ENCODE measurements at regions of chr5 and their contacts with region 1.

Region 1: GRCh38 chr5:148740966-148741742 is 85.3 kb upstream of the ADRB2 start:
- DNase-seq: no peak
- H3K4me3 ChIP-seq: no peak overlapping the region
- H3K27ac ChIP-seq: peak overlapping the region in 6 of 59 donors; percentile 0 to 59 (median 29)
- H3K27me3 ChIP-seq: no peaks in the 10 kb centered on the region
- CTCF ChIP-seq: peak; percentile 62 to 91 (median 83)

Region 2: GRCh38 chr5:147863454-147864206 is 877.5 kb before region 1 on chr5:
- intact Hi-C with region 1: no loop called
- DNase-seq: no peak
- H3K4me3 ChIP-seq: no peak overlapping the region
- H3K27ac ChIP-seq: no peak overlapping the region
- H3K27me3 ChIP-seq: peaks cover 0 to 2% (median 0%) of the 10 kb centered on the region in 45 donors
- CTCF ChIP-seq: no peak

Region 3: GRCh38 chr5:148831590-148832565 is 90.7 kb after region 1 on chr5:
- intact Hi-C with region 1: loop called (anchors 5 kb)
- DNase-seq: peak in 1 of 10 donors; percentile 33
- H3K4me3 ChIP-seq: peak overlapping the region in 32 of 59 donors; percentile 1 to 86 (median 70)
- H3K27ac ChIP-seq: peak overlapping the region in 27 of 59 donors; percentile 1 to 73 (median 40)
- H3K27me3 ChIP-seq: no peaks in the 10 kb centered on the region
- CTCF ChIP-seq: no peak

Region 4: DNA sequence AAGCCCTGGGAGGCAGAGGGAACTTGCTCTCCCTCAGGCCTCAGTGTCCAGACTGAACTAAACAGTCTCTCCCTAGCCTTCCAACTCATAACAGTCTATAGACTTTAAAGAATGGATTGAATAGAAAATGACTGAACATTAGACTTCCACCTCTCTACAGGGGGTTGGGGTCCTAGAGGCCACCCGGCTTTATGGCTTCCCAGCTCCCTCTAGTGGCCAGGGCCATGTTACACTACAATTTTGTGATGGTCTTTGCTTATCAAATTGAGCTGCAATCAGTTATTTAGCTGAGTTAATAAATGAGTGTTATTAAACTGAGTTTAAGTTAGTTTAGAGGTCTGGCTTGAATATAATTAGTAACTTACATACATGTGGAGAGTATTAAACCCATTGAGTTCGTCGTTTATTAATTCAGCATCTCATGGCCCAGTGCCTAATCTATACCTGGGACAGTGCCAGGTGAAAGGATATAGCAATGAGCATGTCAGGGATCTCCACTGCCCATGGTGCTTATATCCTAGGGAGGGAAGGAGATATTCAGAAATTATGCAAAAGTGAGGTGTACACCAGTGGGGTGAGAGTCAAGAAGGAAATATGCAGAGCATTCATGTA is 216.5 kb after region 1 on chr5:
- intact Hi-C with region 1: loop called in 1 of 2 experiments (anchors 5 kb)
- DNase-seq: peak in 1 of 10 donors; percentile 16
- H3K4me3 ChIP-seq: no peak overlapping the region
- H3K27ac ChIP-seq: no peak overlapping the region
- H3K27me3 ChIP-seq: no peaks in the 10 kb centered on the region
- CTCF ChIP-seq: peak; percentile 44 to 79 (median 69)

Region 5: GRCh38 chr5:148998174-148998797 is 257.1 kb after region 1 on chr5:
- intact Hi-C with region 1: loop called in 1 of 2 experiments (anchors 5 kb)
- DNase-seq: peak in 1 of 10 donors; percentile 42
- H3K4me3 ChIP-seq: no peak overlapping the region
- H3K27ac ChIP-seq: peak overlapping the region in 9 of 59 donors; percentile 7 to 47 (median 21)
- H3K27me3 ChIP-seq: peaks cover 0 to 4% (median 0%) of the 10 kb centered on the region in 45 donors
- CTCF ChIP-seq: peak; percentile 44 to 81 (median 69)

Region 6: GRCh38 chr5:149035372-149035790 is 294.2 kb after region 1 on chr5:
- intact Hi-C with region 1: loop called (anchors 2 to 5 kb)
- DNase-seq: peak; percentile 72 to 88 (median 82)
- H3K4me3 ChIP-seq: no peak overlapping the region
- H3K27ac ChIP-seq: peak overlapping the region in 25 of 59 donors; percentile 1 to 82 (median 24)
- H3K27me3 ChIP-seq: no peaks in the 10 kb centered on the region
- CTCF ChIP-seq: peak; percentile 60 to 95 (median 89)

Region 7: GRCh38 chr5:149114403-149115312 is 373.5 kb after region 1 on chr5:
- intact Hi-C with region 1: loop called in 1 of 2 experiments (anchors 5 kb)
- DNase-seq: peak in 9 of 10 donors; percentile 56 to 83 (median 64)
- H3K4me3 ChIP-seq: no peak overlapping the region
- H3K27ac ChIP-seq: peak overlapping the region in 34 of 59 donors; percentile 8 to 75 (median 54)
- H3K27me3 ChIP-seq: no peaks in the 10 kb centered on the region
- CTCF ChIP-seq: peak in 55 of 56 donors; percentile 54 to 93 (median 80)

Region 8: DNA sequence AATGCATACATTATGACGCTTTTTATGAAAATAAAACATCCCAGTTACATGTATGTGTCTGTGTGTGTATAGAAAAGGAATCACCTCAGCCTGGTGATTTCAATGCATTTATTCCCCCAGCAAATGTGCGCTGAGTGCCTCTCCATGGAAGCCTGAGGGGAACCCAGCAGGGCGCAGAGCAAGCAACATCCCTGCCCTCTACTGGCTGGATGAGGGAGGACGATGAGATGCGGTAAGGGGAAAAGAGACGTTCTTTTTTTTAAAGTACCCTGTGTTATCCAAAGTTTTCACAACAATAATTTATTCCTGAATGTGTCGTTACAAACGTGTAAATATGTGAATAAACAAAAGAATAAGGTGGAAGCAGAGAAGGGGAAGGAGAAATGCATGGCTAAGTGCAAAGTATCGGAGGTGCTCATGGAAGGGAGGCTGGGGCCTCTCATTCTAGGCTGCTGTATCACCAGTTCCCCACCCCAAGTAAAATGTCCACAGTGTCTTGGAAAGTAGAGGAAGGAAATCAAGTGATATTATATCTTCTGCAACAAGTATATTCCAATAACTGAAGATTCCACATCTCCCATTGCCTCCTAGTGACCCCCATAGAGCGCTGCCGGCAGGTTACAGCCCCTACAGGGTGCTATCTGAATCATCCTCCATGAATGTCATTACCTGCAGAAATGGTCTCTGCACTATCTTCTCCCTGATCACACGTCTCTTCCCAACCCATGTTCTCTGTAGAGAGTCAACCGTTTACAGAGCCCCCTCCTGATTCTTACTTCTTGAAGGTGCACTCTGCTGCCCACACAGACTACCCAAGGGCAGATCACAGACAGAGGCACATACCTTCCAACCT is 387.1 kb after region 1 on chr5:
- intact Hi-C with region 1: loop called in 1 of 2 experiments (anchors 5 kb)
- DNase-seq: no peak
- H3K4me3 ChIP-seq: no peak overlapping the region
- H3K27ac ChIP-seq: no peak overlapping the region
- H3K27me3 ChIP-seq: no peaks in the 10 kb centered on the region
- CTCF ChIP-seq: peak in 55 of 56 donors; percentile 36 to 74 (median 59)